ENCODE measurements at regions of chr14 and their contacts with region 1.

Region 1: DNA sequence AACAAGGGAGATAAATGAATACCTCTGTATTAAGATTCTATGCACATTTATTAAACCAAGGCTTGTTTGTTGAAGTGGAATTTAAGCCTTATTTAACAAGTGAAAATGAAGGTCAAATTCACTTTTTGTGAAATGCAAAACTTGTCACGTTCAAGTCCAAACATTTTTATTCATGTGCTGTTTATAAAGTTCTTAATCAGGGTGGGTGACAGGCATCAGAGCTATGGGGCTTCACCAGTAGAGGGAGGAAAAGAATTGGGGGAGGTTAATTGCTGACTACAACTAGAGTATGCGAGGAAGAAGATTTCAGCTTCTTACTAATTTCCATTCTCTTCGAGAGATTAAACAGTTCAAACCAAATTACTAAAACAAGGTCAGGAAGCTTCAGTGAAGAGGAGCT is 9.7 kb downstream of the MOK start:
- DNase-seq: peak; percentile 29

Region 2: DNA sequence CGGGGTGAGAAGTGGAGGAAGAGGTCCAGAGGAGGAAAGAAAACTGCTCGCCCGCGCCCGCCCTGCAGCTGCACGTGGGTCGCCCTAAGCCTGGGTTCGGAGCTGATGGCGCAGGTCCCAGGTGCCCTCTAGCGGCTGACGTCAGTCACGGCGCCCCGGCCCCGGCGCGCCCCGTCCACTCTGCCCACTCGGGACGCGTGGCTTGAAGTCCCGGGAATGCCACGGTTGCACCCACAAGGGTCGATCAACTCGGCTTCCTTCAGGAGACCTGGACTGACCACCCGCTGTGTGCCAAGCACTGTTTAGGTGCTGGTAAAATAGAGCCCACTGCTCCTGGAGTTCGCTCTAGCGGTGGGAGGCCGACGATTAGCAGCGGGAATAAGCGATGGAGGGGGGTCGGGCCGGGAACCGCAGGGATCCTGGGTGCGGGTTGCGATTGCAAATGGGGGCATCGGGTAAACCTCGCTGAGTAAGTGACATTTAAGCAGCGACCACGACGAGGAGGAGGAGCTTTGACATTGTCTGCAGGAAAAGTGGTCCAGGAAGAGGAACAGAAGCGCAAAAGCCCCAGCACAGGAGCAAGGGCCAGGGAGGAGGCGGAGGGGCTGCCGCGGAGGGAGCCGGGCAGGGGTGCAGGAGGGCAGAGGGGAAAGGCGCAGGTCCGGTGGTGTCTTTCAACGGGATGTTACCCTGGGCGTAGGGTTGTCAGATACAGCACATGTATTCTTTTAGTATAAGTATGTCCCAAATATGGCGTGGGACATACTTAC is 19.2 kb after region 1 on chr14:
- CTCF ChIA-PET with region 1: interaction called, 10 read pairs
- POLR2A ChIA-PET with region 1: interaction called, 5 read pairs
- DNase-seq: peak; percentile 76

Measured in HEK293T (cell line).